Ascending aorta (tissue), 2 donors: ENCODE measurements at regions of chr6 and their contacts with region 1.

Region 1: GRCh38 chr6:27753668-27754407 is 158.4 kb downstream of the OR2B2 start:
- DNase-seq: peak in 1 of 2 donors; percentile 81
- H3K4me3 ChIP-seq: peak overlapping the region; percentile 32 to 93
- H3K27ac ChIP-seq: no peak overlapping the region
- H3K4me1 ChIP-seq: peaks cover 0 to 3% of the 10 kb centered on the region in 2 donors
- H3K27me3 ChIP-seq: peaks cover 5% of the 10 kb centered on the region
- CTCF ChIP-seq: no peak

Region 2: GRCh38 chr6:27126815-27127537 is 626.9 kb before region 1 on chr6:
- intact Hi-C with region 1: loop called (anchors 2 kb)
- DNase-seq: peak; percentile 51 to 95
- H3K4me3 ChIP-seq: peak overlapping the region; percentile 39 to 61
- H3K27ac ChIP-seq: peak overlapping the region; percentile 59 to 64
- H3K4me1 ChIP-seq: peaks cover 0 to under 1% of the 10 kb centered on the region in 2 donors
- H3K27me3 ChIP-seq: no peaks in the 10 kb centered on the region
- CTCF ChIP-seq: peak; percentile 75 to 90 (median 75)

Region 3: DNA sequence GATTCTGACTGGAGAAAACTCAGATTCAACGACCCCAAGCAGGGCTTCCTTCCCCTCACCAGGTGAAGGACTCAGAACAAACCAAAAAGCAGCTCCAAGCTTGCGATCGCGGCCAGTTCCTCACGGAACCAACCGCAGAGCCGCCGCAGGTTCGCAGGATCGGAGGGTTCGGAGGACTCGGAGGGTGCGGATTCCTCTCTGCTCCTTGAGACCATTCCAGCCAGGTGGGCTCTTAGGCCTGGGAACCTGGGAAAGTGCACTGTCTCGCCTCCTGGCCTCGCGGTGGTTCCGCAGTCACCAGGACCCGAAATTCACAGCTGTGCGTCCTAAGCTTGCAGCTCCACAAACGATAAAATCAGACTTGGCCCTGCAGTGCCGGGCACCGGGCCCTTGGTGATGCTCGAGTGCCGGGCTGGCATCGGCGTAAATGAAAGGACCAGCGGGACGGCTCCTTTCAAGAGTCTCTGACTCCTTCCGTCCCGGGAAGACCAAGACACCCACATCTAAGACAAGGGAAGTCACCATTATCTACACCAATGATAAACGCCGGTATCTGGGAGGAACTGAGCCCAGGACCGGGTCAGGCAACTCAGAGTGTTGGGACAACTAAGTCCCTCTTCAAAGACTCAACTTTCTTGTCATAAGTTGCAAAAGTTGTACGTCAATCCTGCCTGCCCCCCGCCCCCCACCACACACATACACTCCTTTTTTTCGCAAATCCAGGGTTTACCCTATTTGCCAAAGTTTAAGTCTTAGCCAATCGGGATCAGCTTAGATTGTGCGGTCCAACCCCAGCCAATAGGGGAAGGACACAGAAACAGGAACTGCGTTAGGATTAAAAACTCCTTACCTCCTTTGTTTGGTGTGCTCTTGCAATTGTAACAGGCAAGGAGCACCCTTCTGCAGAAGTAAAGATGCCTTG is 576.1 kb before region 1 on chr6:
- intact Hi-C with region 1: loop called (anchors 2 kb)
- DNase-seq: peak; percentile 46 to 92
- H3K4me3 ChIP-seq: peak overlapping the region; percentile 75 to 81
- H3K27ac ChIP-seq: peak overlapping the region; percentile 80 to 85
- H3K4me1 ChIP-seq: peaks cover 0 to 7% of the 10 kb centered on the region in 2 donors
- H3K27me3 ChIP-seq: no peaks in the 10 kb centered on the region
- CTCF ChIP-seq: peak in 2 of 3 experiments; percentile 53 to 66

Region 4: DNA sequence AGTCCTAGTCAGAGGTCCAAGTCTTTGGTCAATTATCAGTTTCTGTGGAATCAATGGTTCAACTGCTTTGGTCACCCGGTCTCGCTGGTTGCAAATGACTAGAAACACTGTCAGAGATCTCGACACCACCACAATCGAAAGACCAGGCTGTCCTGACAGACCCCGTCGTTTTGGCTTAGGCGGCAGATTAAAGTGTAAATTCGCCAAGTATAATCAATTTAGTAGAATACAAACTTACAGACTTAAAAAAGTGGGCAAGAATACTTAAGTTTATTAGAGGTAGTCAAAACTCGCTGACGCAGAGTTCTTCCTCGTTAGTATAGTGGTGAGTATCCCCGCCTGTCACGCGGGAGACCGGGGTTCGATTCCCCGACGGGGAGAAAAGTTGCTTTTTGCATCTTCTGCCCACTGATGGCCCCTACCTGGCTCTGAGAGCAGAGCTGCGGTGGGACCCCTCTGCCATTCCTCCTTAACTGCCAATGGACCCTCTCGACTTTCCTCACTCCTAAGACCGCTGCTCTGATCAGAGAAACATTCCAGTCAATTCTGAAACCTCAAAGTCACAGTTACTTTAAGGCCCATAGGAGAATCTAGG is 250.3 kb before region 1 on chr6:
- intact Hi-C with region 1: loop called (anchors 5 kb)
- DNase-seq: peak in 1 of 2 donors; percentile 78
- H3K4me3 ChIP-seq: peak overlapping the region; percentile 49 to 59
- H3K27ac ChIP-seq: peak overlapping the region in 1 of 2 donors; percentile 31
- H3K4me1 ChIP-seq: no peaks in the 10 kb centered on the region
- H3K27me3 ChIP-seq: no peaks in the 10 kb centered on the region
- CTCF ChIP-seq: no peak

Region 5: GRCh38 chr6:27518881-27519795 is 234.7 kb before region 1 on chr6:
- intact Hi-C with region 1: loop called (anchors 1 kb)
- DNase-seq: peak in 1 of 2 donors; percentile 77
- H3K4me3 ChIP-seq: peak overlapping the region; percentile 76 to 86
- H3K27ac ChIP-seq: peak overlapping the region; percentile 90 to 94
- H3K4me1 ChIP-seq: peaks cover 0 to 8% of the 10 kb centered on the region in 2 donors
- H3K27me3 ChIP-seq: no peaks in the 10 kb centered on the region
- CTCF ChIP-seq: peak; percentile 31 to 78 (median 71)

Region 6: DNA sequence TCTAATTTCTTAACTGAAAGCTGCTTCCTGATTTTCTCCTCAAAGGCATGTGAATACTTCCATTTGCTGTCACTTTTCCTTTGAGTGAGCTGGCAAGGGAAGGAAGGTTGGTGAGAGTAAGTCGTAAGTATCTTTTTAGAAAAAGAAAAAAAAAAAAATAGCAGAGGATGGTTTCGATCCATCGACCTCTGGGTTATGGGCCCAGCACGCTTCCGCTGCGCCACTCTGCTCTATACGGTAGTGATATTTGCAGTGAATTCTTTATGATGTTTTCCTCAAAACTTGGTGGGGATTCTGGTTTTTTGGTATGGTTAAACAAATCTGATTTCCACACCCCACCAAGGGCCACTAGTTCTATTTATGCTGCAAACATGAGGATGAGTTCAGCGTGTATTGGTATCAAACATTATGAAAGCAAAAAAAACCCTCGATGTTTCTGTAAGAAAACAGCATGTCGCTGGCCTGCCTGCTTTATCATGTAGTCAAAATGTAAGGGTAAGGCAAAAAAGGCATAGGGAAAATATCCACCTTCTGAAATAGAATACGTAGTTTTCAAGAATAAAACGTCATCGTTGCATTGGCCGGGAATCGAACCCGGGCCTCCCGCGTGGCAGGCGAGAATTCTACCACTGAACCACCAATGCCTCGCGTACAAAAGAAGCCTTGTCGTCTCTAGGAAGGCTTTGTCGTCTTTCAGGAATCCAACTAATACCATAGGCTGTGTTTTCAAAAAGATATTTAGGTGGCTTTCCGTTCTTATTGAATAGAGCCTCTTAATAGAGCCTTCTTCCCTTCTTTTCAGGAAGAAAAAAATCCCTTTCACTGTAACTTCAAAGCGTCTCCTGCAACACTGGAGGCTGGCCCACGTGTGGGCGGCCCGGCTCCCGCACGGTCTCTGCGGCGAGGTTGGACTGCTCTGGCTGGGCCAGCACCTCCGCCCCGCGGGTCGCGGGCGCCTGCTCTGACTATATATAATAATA is 148.8 kb after region 1 on chr6:
- intact Hi-C with region 1: loop called (anchors 2 kb)
- DNase-seq: peak in 1 of 2 donors; percentile 93
- H3K4me3 ChIP-seq: peak overlapping the region; percentile 59 to 73
- H3K27ac ChIP-seq: peak overlapping the region; percentile 87 to 94
- H3K4me1 ChIP-seq: peaks cover 0 to 3% of the 10 kb centered on the region in 2 donors
- H3K27me3 ChIP-seq: no peaks in the 10 kb centered on the region
- CTCF ChIP-seq: no peak